ENCODE measurements at regions of chr16 and their contacts with region 1.

Region 1: DNA sequence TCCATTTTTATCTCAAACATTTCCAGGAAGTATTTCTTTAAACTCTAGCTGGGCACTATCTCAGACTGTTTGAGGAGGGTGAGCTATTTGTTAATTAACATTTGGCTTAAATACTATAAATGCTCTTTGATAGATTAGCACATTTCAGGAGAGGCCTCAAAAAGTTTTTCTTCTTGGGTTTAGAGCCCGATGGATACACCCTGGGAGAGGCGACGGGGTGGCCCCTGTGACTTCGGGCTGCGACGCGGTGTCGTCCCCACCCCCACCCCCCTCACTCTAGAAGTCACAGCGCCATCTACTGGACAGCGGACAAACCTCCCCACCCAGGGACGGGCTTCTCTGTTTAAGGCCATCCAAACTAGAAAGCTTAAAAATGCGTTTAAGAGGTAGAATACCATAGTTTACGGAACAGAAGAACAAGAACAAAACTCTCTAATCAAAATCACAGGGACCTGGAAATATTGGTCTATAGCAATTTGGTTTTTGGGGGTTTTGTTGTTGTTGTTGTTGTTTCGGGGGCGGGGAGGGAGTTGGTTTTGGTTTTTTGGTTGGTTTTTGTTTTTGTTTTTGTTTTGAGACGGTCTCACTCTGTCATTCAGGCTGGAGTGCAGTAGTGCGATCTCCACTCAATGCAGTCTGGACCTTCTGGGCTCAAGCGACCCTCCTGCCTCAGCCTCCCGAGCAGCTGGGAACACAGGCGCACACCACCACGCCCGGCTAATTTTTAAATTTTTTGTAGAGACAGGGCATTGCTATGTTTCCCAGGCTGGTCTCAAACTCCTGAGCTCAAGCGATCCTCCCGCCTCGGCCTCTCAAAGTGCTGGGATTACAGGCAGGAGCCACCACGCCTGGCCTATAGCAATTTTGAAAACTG is 254.4 kb downstream of the C16orf95 start:
- DNase-seq: peak; percentile 88
- H3K4me3 ChIP-seq: peak overlapping the region; percentile 24 to 93 (median 43)
- H3K27ac ChIP-seq: peak overlapping the region; percentile 92
- H3K4me1 ChIP-seq: peaks cover 49% of the 10 kb centered on the region
- H3K27me3 ChIP-seq: no peaks in the 10 kb centered on the region
- CTCF ChIP-seq: peak; percentile 80 to 83
- POLR2A ChIP-seq: no peak

Region 2: GRCh38 chr16:86575754-86576557 is 486.9 kb before region 1 on chr16:
- CTCF ChIA-PET with region 1: interaction called, 283 read pairs
- POLR2A ChIA-PET with region 1: no interaction called
- dilution Hi-C with region 1: no loop called
- intact Hi-C with region 1: no loop called
- DNase-seq: peak; percentile 92
- H3K4me3 ChIP-seq: peak overlapping the region; percentile 33 to 67 (median 62)
- H3K27ac ChIP-seq: peak overlapping the region; percentile 82
- H3K4me1 ChIP-seq: peaks cover 56% of the 10 kb centered on the region
- H3K27me3 ChIP-seq: no peaks in the 10 kb centered on the region
- CTCF ChIP-seq: peak; percentile 73 to 74
- POLR2A ChIP-seq: peak; percentile 83

Region 3: GRCh38 chr16:86761111-86762031 is 301.4 kb before region 1 on chr16:
- CTCF ChIA-PET with region 1: interaction called, 16 read pairs
- POLR2A ChIA-PET with region 1: no interaction called
- dilution Hi-C with region 1: no loop called
- intact Hi-C with region 1: loop called (anchors 2 kb)
- DNase-seq: peak; percentile 72
- H3K4me3 ChIP-seq: no peak overlapping the region
- H3K27ac ChIP-seq: no peak overlapping the region
- H3K4me1 ChIP-seq: peaks cover 13% of the 10 kb centered on the region
- H3K27me3 ChIP-seq: peaks cover 0 to 8% of the 10 kb centered on the region in 2 experiments
- CTCF ChIP-seq: peak; percentile 91 to 96
- POLR2A ChIP-seq: no peak

Region 4: DNA sequence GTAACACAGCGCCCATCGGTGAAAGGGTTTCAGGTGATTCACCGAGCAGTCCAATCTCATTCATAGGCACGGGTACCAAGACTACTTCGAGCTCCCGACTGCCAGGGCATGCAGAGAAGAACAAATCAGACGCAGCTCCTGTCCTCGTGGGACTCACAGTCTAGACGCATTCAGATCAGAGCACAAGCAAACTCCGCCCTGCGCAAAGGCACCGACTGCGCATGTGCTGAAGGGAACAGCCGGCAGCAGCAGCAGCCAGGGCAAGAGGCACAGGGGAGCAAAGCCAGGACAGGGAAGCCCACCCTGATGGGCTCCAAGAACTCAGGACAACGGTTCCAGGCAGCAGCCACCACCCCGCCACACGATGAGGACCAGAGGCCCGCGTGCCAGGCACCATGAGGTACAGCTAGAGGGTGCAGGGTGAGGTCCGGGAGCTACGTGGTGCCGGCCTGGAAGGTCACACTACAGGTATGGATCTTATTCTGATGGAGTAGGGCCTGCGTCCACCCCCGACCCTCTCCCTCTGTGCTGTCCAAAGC is 168.7 kb before region 1 on chr16:
- CTCF ChIA-PET with region 1: interaction called, 10 read pairs
- POLR2A ChIA-PET with region 1: no interaction called
- dilution Hi-C with region 1: no loop called
- intact Hi-C with region 1: no loop called
- DNase-seq: no peak
- H3K4me3 ChIP-seq: no peak overlapping the region
- H3K27ac ChIP-seq: no peak overlapping the region
- H3K4me1 ChIP-seq: peaks cover 7% of the 10 kb centered on the region
- H3K27me3 ChIP-seq: no peaks in the 10 kb centered on the region
- CTCF ChIP-seq: no peak
- POLR2A ChIP-seq: no peak

Region 5: GRCh38 chr16:86975445-86975844 is 87.4 kb before region 1 on chr16:
- CTCF ChIA-PET with region 1: no interaction called
- POLR2A ChIA-PET with region 1: no interaction called
- dilution Hi-C with region 1: no loop called
- intact Hi-C with region 1: no loop called
- DNase-seq: peak; percentile 87
- H3K4me3 ChIP-seq: no peak overlapping the region
- H3K27ac ChIP-seq: no peak overlapping the region
- H3K4me1 ChIP-seq: peaks cover 2% of the 10 kb centered on the region
- H3K27me3 ChIP-seq: peaks cover 1 to 2% of the 10 kb centered on the region in 2 experiments
- CTCF ChIP-seq: no peak
- POLR2A ChIP-seq: no peak

Region 6: GRCh38 chr16:87017365-87018012 is 45.3 kb before region 1 on chr16:
- CTCF ChIA-PET with region 1: interaction called, 32 read pairs
- POLR2A ChIA-PET with region 1: no interaction called
- dilution Hi-C with region 1: no loop called
- intact Hi-C with region 1: loop called (anchors 1 kb)
- DNase-seq: peak; percentile 88
- H3K4me3 ChIP-seq: peak overlapping the region in 1 of 3 experiments; percentile 8
- H3K27ac ChIP-seq: peak overlapping the region; percentile 21
- H3K4me1 ChIP-seq: peaks cover 15% of the 10 kb centered on the region
- H3K27me3 ChIP-seq: no peaks in the 10 kb centered on the region
- CTCF ChIP-seq: peak; percentile 50 to 52
- POLR2A ChIP-seq: no peak

Region 7: DNA sequence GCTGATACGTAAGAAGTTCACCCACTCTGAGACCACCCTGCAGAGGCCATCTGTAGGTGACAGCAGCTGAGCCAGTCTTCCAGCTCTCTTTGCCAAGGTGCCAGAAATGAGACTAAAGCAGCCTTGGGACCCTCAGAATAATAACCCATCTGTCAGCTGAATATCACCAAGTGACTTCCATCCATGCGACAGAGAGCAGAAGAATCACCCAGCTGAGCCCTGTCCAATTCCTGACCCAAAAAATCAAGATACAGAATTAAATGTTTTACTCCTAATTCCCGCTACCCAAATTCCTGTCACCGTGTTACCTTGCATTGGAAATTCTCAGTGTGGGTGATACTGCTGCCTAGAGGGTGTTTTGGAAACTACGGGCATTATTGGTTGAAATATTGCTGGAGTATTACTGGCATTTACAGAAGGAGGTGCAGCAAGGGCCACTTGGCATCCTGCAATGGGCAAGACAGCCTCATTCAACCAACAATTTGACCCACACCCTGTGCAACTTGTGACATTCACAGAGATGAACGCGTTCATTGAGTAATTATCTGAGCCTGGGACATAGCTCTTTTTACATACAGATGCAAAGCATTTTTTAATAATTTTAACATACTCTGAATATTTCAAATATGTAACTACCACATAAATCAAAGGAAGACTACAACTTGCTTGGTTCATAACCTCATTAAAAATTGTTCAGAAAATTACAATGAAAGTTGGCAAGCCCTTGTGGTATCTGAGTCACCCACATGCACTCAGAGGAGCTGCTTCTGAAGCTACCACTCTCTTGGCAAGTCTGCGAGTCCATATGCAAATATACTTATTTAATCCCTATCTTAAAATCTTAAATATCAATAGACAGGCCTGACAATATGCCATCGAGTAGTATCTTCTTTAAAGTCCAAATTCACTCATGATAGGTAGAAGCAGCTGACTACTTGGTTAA is 127.8 kb after region 1 on chr16:
- CTCF ChIA-PET with region 1: interaction called, 14 read pairs
- POLR2A ChIA-PET with region 1: no interaction called
- dilution Hi-C with region 1: no loop called
- intact Hi-C with region 1: no loop called
- DNase-seq: no peak
- H3K4me3 ChIP-seq: no peak overlapping the region
- H3K27ac ChIP-seq: no peak overlapping the region
- H3K4me1 ChIP-seq: peaks cover 9% of the 10 kb centered on the region
- H3K27me3 ChIP-seq: no peaks in the 10 kb centered on the region
- CTCF ChIP-seq: peak in 1 of 2 donors; percentile 35
- POLR2A ChIP-seq: no peak

Region 8: GRCh38 chr16:87297918-87298631 is 235.3 kb after region 1 on chr16:
- CTCF ChIA-PET with region 1: interaction called, 14 read pairs
- POLR2A ChIA-PET with region 1: no interaction called
- dilution Hi-C with region 1: no loop called
- intact Hi-C with region 1: no loop called
- DNase-seq: peak; percentile 44
- H3K4me3 ChIP-seq: no peak overlapping the region
- H3K27ac ChIP-seq: no peak overlapping the region
- H3K4me1 ChIP-seq: no peaks in the 10 kb centered on the region
- H3K27me3 ChIP-seq: no peaks in the 10 kb centered on the region
- CTCF ChIP-seq: peak; percentile 53 to 77
- POLR2A ChIP-seq: no peak

Measured in endothelial cell of umbilical vein (primary cell).